OCI-LY7 (cell line): ENCODE measurements at regions of chr1 and their contacts with region 1.

Region 1: GRCh38 chr1:9494929-9495758 is 44.1 kb upstream of the SLC25A33 start:
- DNase-seq: peak; percentile 82
- H3K4me3 ChIP-seq: peak overlapping the region; percentile 62
- H3K27ac ChIP-seq: no peak overlapping the region
- H3K4me1 ChIP-seq: peaks cover 9% of the 10 kb centered on the region
- CTCF ChIP-seq: peak; percentile 95

Region 2: GRCh38 chr1:9110669-9111356 is 384.3 kb before region 1 on chr1:
- CTCF ChIA-PET with region 1: no interaction called
- POLR2A ChIA-PET with region 1: no interaction called
- intact Hi-C with region 1: loop called (anchors 2 kb)
- DNase-seq: peak; percentile 85
- H3K4me3 ChIP-seq: no peak overlapping the region
- H3K27ac ChIP-seq: no peak overlapping the region
- H3K4me1 ChIP-seq: peaks cover 15% of the 10 kb centered on the region
- CTCF ChIP-seq: peak; percentile 96

Region 3: DNA sequence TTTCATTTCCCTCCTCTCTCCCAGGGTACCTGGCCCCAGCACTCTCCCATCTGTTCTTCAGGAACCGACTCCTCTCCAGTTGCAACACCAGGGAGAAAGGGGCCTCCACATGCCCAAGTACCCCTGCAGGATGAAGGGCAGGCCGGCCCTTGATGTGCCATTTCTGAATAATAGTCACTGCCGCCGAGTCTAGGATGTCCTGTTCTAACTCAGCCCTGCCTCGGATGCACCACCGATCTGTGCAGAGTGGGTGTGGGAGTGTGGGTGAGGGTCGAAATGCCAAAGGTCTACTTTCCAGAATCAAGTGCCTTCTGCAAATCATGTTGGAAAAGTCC is 227.8 kb before region 1 on chr1:
- CTCF ChIA-PET with region 1: interaction called, 5 read pairs
- POLR2A ChIA-PET with region 1: interaction called, 3 read pairs
- intact Hi-C with region 1: loop called (anchors 1 kb)
- DNase-seq: no peak
- H3K4me3 ChIP-seq: no peak overlapping the region
- H3K27ac ChIP-seq: no peak overlapping the region
- H3K4me1 ChIP-seq: no peaks in the 10 kb centered on the region
- CTCF ChIP-seq: peak; percentile 17; the same call in 1 of the 2 replicates

Region 4: DNA sequence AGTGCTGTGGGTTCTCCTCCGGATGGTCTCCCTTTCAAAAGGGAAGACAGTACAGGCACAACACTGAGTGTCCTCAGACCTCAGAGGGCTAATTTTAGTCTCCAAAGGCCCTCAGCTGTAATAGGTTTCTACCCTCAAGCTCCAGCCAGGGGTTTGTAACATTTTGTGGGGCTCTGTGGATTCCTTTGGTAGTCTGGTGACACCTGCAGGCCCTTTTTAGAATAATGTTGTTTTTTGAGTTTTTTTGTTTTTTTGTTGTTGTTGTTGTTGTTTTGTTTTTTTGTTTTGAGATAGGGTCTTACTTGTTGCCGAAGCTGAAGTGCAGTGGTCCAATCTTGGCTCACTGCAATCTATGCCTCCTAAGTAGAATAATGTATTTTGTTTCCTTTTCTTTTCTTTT is 78.6 kb after region 1 on chr1:
- CTCF ChIA-PET with region 1: interaction called, 3 read pairs
- POLR2A ChIA-PET with region 1: interaction called, 3 read pairs
- intact Hi-C with region 1: loop called (anchors 1 kb)
- DNase-seq: peak; percentile 55
- H3K4me3 ChIP-seq: no peak overlapping the region
- H3K27ac ChIP-seq: no peak overlapping the region
- H3K4me1 ChIP-seq: peaks cover 17% of the 10 kb centered on the region
- CTCF ChIP-seq: peak; percentile 75